HCT116 (cell line): ENCODE measurements at regions of chr12 and their contacts with region 1.

Region 1: DNA sequence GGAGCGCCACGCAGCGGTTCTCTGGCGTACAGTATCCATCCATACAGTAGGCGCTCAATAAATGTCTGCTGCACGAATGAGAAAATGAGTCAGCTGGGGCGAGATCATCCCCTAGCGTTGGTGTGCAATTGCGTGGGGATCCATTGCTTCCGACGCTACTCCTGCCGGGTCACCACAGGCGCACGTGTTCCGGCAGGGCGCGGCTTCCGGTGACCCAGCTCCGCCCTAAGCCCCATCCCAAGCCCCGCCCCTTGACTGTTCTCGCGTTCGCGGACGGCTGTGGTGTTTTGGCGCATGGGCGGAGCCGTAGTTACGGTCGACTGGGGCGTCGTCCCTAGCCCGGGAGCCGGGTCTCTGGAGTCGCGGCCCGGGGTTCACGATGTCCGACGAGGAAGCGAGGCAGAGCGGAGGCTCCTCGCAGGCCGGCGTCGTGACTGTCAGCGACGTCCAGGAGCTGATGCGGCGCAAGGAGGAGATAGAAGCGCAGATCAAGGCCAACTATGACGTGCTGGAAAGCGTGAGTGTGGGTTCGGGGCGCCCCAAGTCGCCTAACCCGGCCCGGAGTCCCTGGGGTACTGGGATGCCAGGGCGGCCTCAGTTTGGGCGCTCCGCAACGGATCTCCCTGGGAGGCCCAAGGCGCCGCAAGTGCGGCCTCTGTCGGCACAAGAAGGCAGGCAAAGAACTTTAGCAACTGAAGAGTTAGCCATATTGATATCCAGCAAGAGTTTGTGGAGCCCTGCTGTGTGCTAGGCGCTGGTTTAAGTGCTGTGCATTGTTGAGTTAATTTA is at the start of gene PSMD9:
- DNase-seq: peak; percentile 98
- ATAC-seq: peak; percentile 94
- H3K4me3 ChIP-seq: peak within 1 kb of the TSS; percentile 95 to 97
- H3K27ac ChIP-seq: peak within 1 kb of the TSS; percentile 86
- H3K4me1 ChIP-seq: peaks cover 17 to 46% of the 10 kb centered on the region in 2 experiments; a peak in 3 of 4 replicates
- H3K27me3 ChIP-seq: no peaks in the 10 kb centered on the region
- CTCF ChIP-seq: peak; percentile 42 to 97 (median 69)
- POLR2A ChIP-seq: peak; percentile 35
- RAD21 ChIP-seq: peak; percentile 98
- total RNA-seq, gene PSMD9: 55.5 TPM

Region 2: DNA sequence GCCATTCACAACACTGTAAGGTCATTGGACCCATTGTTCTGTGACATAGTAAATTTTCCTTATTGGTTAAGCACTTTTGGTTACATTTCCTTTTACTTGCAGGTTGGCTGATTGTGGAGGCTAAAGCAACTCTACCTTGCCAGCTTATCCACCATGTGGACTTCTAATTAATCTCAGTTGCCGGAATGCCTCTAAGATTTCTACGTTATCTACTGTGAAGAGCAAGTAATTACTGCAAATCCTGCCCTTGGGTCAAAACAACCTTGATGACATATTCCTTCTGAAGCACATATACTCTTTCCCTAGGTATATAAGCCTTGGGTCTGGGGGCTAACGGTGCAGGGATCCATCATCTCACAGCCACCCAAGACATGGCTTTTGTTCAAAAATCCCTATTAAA is 199.7 kb before region 1 on chr12:
- CTCF ChIA-PET with region 1: no interaction called
- POLR2A ChIA-PET with region 1: no interaction called
- RAD21 ChIA-PET with region 1: no interaction called
- intact Hi-C with region 1: loop called (anchors 1 kb)
- DNase-seq: no peak
- ATAC-seq: no peak
- H3K4me3 ChIP-seq: no peak overlapping the region
- H3K27ac ChIP-seq: no peak overlapping the region
- H3K4me1 ChIP-seq: peaks cover 4 to 15% of the 10 kb centered on the region in 2 experiments; a peak in 3 of 4 replicates
- H3K27me3 ChIP-seq: no peaks in the 10 kb centered on the region
- CTCF ChIP-seq: no peak
- POLR2A ChIP-seq: no peak
- RAD21 ChIP-seq: no peak

Region 3: GRCh38 chr12:121697098-121697698 is 191.5 kb before region 1 on chr12:
- CTCF ChIA-PET with region 1: no interaction called
- POLR2A ChIA-PET with region 1: no interaction called
- RAD21 ChIA-PET with region 1: no interaction called
- intact Hi-C with region 1: loop called (anchors 2 kb)
- DNase-seq: peak; percentile 47
- ATAC-seq: peak; percentile 59
- H3K4me3 ChIP-seq: no peak overlapping the region
- H3K27ac ChIP-seq: no peak overlapping the region
- H3K4me1 ChIP-seq: peaks cover 0 to 7% of the 10 kb centered on the region in 2 experiments; a peak in 2 of 4 replicates
- H3K27me3 ChIP-seq: no peaks in the 10 kb centered on the region
- CTCF ChIP-seq: peak; percentile 23 to 96 (median 60); a peak in 5 of 6 replicates
- POLR2A ChIP-seq: no peak
- RAD21 ChIP-seq: peak; percentile 89

Region 4: GRCh38 chr12:121786441-121786825 is 102.2 kb before region 1 on chr12:
- CTCF ChIA-PET with region 1: interaction called, 9 read pairs
- POLR2A ChIA-PET with region 1: interaction called, 3 read pairs
- RAD21 ChIA-PET with region 1: no interaction called
- intact Hi-C with region 1: loop called (anchors 2 kb)
- DNase-seq: peak; percentile 99
- ATAC-seq: peak; percentile 86
- H3K4me3 ChIP-seq: peak overlapping the region in 1 of 2 experiments; percentile 37; a peak in 2 of 4 replicates
- H3K27ac ChIP-seq: peak overlapping the region; percentile 98
- H3K4me1 ChIP-seq: peaks cover 63 to 95% of the 10 kb centered on the region in 2 experiments
- H3K27me3 ChIP-seq: no peaks in the 10 kb centered on the region
- CTCF ChIP-seq: no peak
- POLR2A ChIP-seq: no peak
- RAD21 ChIP-seq: no peak

Region 5: DNA sequence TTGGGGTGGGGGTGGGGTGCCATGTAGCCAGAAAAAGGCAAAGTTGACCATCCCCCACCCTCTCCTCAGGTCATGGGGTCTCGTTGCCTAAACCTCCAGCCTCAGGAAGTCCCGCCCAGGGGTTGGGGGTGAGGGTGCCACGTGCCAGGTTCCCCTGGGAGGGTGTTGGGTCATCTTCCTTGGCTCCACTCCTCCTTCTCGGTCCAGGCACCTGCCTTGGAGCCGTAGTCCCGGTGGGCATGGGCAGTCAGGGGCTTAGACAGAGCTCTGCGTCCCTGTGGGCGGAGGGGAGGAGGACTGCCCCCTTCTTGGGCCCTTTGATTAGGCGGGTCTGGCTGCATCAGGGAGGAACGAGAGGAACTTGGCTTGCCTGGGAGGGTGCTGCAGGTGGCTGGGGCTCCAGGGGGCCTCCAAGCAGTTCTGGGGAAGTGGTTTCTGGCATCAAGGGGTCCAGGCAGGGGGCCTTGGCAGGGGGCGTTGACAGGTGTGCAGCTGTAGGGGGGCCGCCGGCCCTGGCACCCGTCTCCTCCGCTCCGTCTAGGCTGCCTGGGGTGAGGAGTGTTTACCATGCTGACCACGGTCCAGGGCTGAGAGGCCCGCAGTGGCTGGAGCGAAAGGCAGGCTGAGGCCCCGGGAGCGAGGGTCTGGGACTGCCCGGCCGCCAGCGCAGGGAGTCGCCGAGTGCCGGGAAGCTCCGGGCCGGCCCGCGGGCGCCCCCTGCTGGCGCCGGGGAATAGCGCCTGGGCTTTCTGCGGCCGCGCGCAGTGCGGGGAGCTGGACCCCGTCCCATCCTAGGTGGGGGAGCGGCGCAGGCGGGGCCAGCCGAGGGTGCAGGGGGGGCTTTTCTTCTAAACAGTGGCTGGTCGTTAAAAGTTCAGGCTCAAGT is 77.0 kb before region 1 on chr12:
- CTCF ChIA-PET with region 1: interaction called, 9 read pairs
- POLR2A ChIA-PET with region 1: interaction called, 3 read pairs
- RAD21 ChIA-PET with region 1: no interaction called
- intact Hi-C with region 1: loop called (anchors 1 kb)
- DNase-seq: no peak
- ATAC-seq: peak; percentile 91
- H3K4me3 ChIP-seq: peak overlapping the region; percentile 44 to 55
- H3K27ac ChIP-seq: peak overlapping the region; percentile 53
- H3K4me1 ChIP-seq: peaks cover 6 to 27% of the 10 kb centered on the region in 2 experiments
- H3K27me3 ChIP-seq: no peaks in the 10 kb centered on the region
- CTCF ChIP-seq: peak; percentile 86 to 96 (median 90)
- POLR2A ChIP-seq: no peak
- RAD21 ChIP-seq: peak; percentile 87

Region 6: DNA sequence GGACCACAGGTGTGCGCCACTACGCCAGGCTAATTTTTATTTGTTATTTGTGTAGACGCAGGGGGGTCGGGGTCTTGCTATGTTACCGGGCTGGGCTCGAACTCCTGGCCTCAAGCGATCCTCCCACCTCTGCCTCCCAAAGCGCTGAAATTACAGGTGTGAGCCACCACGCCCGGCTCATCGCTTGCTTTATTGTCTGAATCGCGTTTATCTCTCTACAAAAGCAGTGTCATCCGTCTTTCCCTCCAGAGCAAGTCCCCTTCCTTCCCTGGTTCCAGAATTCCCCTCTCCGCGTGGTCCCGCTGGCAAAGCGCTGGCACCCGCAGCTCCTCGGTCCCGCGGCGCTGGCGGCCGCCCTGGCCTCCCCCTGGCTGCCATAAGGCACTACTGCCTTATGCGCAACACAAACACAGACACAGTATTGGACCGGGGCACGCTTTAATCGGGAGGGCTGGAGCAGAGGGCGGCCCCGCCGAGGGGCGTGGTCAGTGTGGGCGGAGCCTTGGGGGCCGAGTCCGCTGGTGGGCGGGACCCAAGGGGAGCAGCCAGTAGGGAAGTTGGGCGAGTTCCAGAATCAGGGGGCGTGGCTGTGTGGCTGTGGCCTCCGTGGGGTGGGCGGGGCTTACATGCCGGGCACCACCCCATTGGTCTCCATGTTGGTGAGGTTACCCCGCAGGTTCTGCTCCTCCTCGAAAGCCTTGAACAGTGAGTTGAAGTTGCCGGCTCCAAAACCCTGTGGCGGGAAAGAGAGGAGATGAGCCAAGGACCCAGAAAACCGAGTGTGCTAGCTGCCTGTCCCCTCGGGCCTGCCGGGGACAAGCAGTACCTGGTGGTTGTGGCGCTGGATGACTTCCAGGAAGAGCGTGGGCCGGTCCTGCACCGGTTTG is 49.3 kb before region 1 on chr12:
- CTCF ChIA-PET with region 1: interaction called, 4 read pairs
- POLR2A ChIA-PET with region 1: no interaction called
- RAD21 ChIA-PET with region 1: interaction called, 3 read pairs
- intact Hi-C with region 1: loop called (anchors 5 kb)
- DNase-seq: peak; percentile 95
- ATAC-seq: peak; percentile 93
- H3K4me3 ChIP-seq: peak overlapping the region; percentile 55 to 94
- H3K27ac ChIP-seq: peak overlapping the region; percentile 66
- H3K4me1 ChIP-seq: peaks cover 4 to 44% of the 10 kb centered on the region in 2 experiments; a peak in 3 of 4 replicates
- H3K27me3 ChIP-seq: no peaks in the 10 kb centered on the region
- CTCF ChIP-seq: peak in 1 of 3 experiments; percentile 45; a peak in 2 of 6 replicates
- POLR2A ChIP-seq: peak; percentile 81
- RAD21 ChIP-seq: no peak